Pancreas (tissue), 10 donors: ENCODE measurements at regions of chr2 and their contacts with region 1.

Region 1: GRCh38 chr2:120699292-120699691 is 36.4 kb upstream of the GLI2 start:
- DNase-seq: peak in 1 of 6 donors; percentile 23
- ATAC-seq: no peak
- H3K4me3 ChIP-seq: no peak overlapping the region
- H3K27ac ChIP-seq: no peak overlapping the region
- H3K4me1 ChIP-seq: no peaks in the 10 kb centered on the region
- H3K27me3 ChIP-seq: peaks cover 0 to 10% (median 3%) of the 10 kb centered on the region in 4 donors
- CTCF ChIP-seq: no peak

Region 2: DNA sequence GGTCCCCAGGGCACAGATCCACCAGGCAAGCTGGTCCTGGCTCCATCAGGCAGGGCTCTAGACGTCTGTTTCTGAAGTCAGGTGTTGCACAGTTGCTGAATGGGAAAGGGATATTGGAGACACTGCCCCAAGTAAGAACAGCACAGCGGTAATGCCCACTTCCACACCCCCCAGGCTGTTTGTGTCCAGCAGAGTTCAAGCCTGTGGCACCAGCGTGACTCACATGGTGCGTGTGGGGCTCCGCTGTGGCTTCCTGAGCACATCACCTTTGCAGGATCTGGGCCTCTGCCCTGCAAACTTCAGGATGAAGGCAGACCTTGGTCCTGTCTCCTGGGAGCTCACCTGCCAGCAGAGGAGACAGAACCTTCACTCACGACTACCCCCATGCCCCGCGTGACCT is 382.4 kb after region 1 on chr2:
- intact Hi-C with region 1: loop called in 1 of 3 experiments (anchors 2 kb)
- DNase-seq: no peak
- ATAC-seq: no peak
- H3K4me3 ChIP-seq: no peak overlapping the region
- H3K27ac ChIP-seq: no peak overlapping the region
- H3K4me1 ChIP-seq: no peaks in the 10 kb centered on the region
- H3K27me3 ChIP-seq: no peaks in the 10 kb centered on the region
- CTCF ChIP-seq: no peak